A549 (cell line): ENCODE measurements at regions of chr4 and their contacts with region 1.

Region 1: GRCh38 chr4:54233277-54233696 is 4.2 kb downstream of the PDGFRA start:
- DNase-seq: peak; percentile 69 to 84
- ATAC-seq: peak; percentile 87 to 90
- H3K4me3 ChIP-seq: peak overlapping the region; percentile 52
- H3K27ac ChIP-seq: peak overlapping the region; percentile 43 to 75; a peak in 4 of 6 replicates
- H3K4me1 ChIP-seq: no peaks in the 10 kb centered on the region
- CTCF ChIP-seq: peak; percentile 48
- EP300 ChIP-seq: no peak
- POLR2A ChIP-seq: no peak
- RAD21 ChIP-seq: peak; percentile 66 to 81

Region 2: DNA sequence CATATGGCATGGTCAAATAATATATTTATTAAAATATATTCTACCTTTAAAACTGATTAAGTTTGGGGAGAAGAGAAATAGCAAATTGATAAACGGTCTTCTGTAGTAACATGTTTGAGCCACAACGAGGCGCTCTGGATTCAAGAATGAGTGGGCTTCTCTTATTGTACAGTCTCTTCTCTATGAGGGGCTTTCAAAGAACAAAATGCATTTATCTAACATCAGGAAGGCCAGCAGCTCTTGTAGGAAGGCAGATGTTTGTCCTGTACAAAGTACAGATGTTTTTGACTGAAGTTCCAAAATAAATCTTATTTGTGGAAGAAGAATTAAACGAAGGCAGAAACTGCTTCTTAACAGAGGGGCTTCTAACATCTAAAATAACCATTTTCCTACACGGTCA is 1217.6 kb before region 1 on chr4:
- CTCF ChIA-PET with region 1: interaction called, 65 read pairs
- POLR2A ChIA-PET with region 1: no interaction called
- DNase-seq: peak in 1 of 2 experiments; percentile 46
- ATAC-seq: no peak
- H3K4me3 ChIP-seq: no peak overlapping the region
- H3K27ac ChIP-seq: no peak overlapping the region
- H3K4me1 ChIP-seq: peaks cover 24% of the 10 kb centered on the region
- CTCF ChIP-seq: peak; percentile 64
- EP300 ChIP-seq: no peak
- POLR2A ChIP-seq: no peak
- RAD21 ChIP-seq: peak; percentile 77

Region 3: DNA sequence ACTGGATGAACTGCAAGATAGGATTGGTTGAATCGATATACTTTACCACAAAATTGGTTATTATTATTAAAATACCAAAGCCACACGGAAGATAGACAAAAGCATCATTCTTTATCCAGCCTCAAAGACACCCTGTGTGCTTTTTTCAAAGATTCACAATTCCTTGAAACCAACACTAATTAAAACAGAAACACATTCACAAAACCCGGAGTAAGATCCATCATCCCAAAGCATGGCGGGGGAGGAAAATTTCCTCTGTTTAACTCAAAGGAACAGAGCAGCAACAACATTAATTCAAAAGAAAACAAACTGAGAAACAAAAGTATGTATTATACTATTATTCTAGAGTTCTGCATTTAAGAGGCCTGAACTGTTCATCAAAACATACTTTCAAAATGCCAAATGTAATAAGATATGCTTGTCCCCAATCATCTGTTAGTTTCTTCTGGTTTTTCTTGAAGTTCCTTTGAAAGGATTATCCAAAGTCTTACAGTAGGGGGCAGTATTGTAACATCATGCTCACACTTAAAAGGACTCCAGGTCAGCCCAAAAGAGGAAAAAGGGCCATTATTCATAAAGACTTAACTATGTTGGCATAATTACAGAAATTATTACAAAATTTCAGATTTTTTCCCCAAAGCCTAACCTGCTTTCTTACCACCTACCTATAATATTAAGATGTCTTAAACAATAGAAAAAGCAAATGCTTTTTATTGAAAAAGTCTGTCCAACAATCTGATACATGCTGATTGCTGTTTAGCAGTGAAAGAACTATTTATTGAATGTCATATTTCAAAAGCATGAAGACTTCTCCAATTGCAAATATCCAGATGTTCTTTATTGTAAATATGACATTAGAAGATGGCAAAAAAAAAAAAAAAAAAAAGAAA is 1036.2 kb before region 1 on chr4:
- CTCF ChIA-PET with region 1: interaction called, 20 read pairs
- POLR2A ChIA-PET with region 1: no interaction called
- DNase-seq: peak; percentile 23 to 69
- ATAC-seq: peak in 1 of 2 experiments; percentile 71; a peak in 3 of 6 replicates
- H3K4me3 ChIP-seq: no peak overlapping the region
- H3K27ac ChIP-seq: no peak overlapping the region
- H3K4me1 ChIP-seq: no peaks in the 10 kb centered on the region
- CTCF ChIP-seq: peak; percentile 68
- EP300 ChIP-seq: no peak
- POLR2A ChIP-seq: no peak
- RAD21 ChIP-seq: peak; percentile 74 to 80

Region 4: GRCh38 chr4:53908661-53909078 is 324.6 kb before region 1 on chr4:
- CTCF ChIA-PET with region 1: interaction called, 52 read pairs
- POLR2A ChIA-PET with region 1: interaction called, 3 read pairs
- DNase-seq: peak; percentile 57 to 77
- ATAC-seq: peak; percentile 91 to 97
- H3K4me3 ChIP-seq: no peak overlapping the region
- H3K27ac ChIP-seq: peak overlapping the region; percentile 50 to 70; a peak in 5 of 6 replicates
- H3K4me1 ChIP-seq: peaks cover 19% of the 10 kb centered on the region; the same call in 2 of the 3 replicates
- CTCF ChIP-seq: peak; percentile 74
- EP300 ChIP-seq: no peak
- POLR2A ChIP-seq: no peak
- RAD21 ChIP-seq: peak; percentile 82 to 83

Region 5: GRCh38 chr4:53929955-53930798 is 303.1 kb before region 1 on chr4:
- CTCF ChIA-PET with region 1: interaction called, 23 read pairs
- POLR2A ChIA-PET with region 1: no interaction called
- DNase-seq: peak; percentile 65 to 78
- ATAC-seq: peak; percentile 96 to 97
- H3K4me3 ChIP-seq: no peak overlapping the region
- H3K27ac ChIP-seq: peak overlapping the region; percentile 15 to 53; a peak in 1 of 6 replicates
- H3K4me1 ChIP-seq: peaks cover 16% of the 10 kb centered on the region; the same call in 1 of the 3 replicates
- CTCF ChIP-seq: peak; percentile 67
- EP300 ChIP-seq: no peak
- POLR2A ChIP-seq: no peak
- RAD21 ChIP-seq: peak; percentile 73 to 79

Region 6: DNA sequence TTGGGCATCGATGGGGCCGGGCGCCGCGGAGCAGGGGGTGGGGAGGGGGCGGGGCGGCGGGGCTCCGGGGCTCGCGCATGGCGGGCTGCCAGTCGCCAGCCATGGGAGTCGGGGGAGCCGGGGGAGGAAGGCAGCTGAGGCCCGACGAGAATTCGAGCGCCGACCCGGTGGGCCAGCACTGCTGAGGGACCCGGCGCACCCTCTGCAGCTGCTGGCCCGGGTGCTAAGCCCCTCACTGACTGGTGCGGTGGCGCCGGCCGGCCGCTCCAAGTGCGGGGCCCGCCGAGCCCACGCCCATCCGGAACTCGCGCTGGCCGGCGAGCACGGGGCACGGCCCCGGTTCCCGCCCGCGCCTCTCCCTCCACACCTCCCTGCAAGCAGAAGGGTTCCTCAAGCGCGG is 84.0 kb before region 1 on chr4:
- CTCF ChIA-PET with region 1: no interaction called
- POLR2A ChIA-PET with region 1: no interaction called
- DNase-seq: no peak
- ATAC-seq: no peak
- H3K4me3 ChIP-seq: no peak overlapping the region
- H3K27ac ChIP-seq: no peak overlapping the region
- H3K4me1 ChIP-seq: no peaks in the 10 kb centered on the region
- CTCF ChIP-seq: no peak
- EP300 ChIP-seq: no peak
- POLR2A ChIP-seq: no peak
- RAD21 ChIP-seq: no peak